ENCODE measurements at regions of chr2 and their contacts with region 1.

Region 1: DNA sequence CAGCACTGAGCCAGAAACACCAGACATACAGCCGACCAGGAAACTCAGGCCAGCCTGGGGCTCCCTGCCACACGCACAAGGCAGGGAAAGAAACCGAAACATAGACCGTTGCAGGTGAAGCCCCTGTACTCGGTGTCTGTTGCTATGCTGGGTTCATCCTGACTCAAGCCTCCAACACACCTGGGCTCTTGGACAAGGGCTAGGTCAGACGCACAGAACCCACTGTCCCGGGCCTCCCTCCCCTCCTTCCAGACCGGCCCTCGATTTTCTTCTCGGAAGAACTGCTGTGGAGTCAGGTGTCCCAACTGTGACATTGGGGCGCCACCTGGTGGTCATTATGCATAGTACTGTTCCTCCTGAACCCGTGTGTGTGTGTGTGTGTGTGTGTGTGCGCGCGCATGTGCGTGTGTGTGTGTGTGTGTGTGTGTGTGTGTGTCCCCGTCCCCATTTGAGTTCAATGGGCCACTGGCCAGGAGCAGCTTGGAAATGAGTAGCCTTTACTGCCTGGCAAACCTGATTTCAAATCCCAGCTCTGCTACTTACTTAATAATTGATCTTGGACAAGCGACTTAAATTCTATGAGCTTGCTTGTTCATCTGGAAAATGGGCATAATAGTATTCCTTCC is 55.4 kb upstream of the GLI2 start:
- DNase-seq: peak; percentile 16
- H3K4me3 ChIP-seq: no peak overlapping the region
- H3K27ac ChIP-seq: no peak overlapping the region
- H3K4me1 ChIP-seq: peaks cover 0 to 10% (median 0%) of the 10 kb centered on the region in 3 donors
- H3K27me3 ChIP-seq: peaks cover 0 to 70% (median 0%) of the 10 kb centered on the region in 4 donors
- CTCF ChIP-seq: peak; percentile 27 to 82 (median 69)
- POLR2A ChIP-seq: no peak

Region 2: DNA sequence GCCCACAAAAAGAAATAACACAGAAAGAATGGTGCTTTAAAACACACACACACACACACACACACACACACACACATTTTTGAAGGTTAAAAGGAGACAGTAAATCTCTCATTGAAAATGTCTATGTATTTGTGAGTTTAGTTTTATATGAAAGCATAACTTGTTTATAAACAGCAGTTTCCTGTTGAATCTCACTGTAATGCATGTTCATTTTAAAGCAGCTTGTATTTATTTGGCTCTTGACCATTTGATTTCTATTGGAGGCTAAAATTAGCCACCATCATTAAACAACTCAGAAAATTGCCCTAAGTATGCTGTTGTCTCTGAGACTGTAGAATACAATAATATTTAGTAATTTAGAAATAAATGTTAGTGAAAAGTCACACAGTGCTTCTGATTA is 552.0 kb before region 1 on chr2:
- intact Hi-C with region 1: loop called (anchors 5 kb)
- DNase-seq: no peak
- H3K4me3 ChIP-seq: no peak overlapping the region
- H3K27ac ChIP-seq: no peak overlapping the region
- H3K4me1 ChIP-seq: no peaks in the 10 kb centered on the region
- H3K27me3 ChIP-seq: no peaks in the 10 kb centered on the region
- CTCF ChIP-seq: no peak
- POLR2A ChIP-seq: no peak

Region 3: GRCh38 chr2:120552800-120553481 is 127.3 kb before region 1 on chr2:
- intact Hi-C with region 1: no loop called
- DNase-seq: no peak
- H3K4me3 ChIP-seq: peak overlapping the region in 1 of 4 donors; percentile 31
- H3K27ac ChIP-seq: peak overlapping the region in 2 of 4 donors; percentile 39 to 53
- H3K4me1 ChIP-seq: peaks cover 0 to 36% (median 21%) of the 10 kb centered on the region in 3 donors
- H3K27me3 ChIP-seq: peaks cover 0 to 46% (median 0%) of the 10 kb centered on the region in 4 donors
- CTCF ChIP-seq: peak; percentile 19 to 82 (median 74)
- POLR2A ChIP-seq: no peak